ENCODE measurements at regions of chr1 and their contacts with region 1.

Region 1: GRCh38 chr1:52141513-52142219 is at the start of gene ZFYVE9:
- DNase-seq: peak; percentile 81 to 92
- ATAC-seq: peak; percentile 95
- H3K4me3 ChIP-seq: peak within 1 kb of the TSS; percentile 76 to 95
- H3K27ac ChIP-seq: peak within 1 kb of the TSS; percentile 92 to 96
- H3K4me1 ChIP-seq: peaks cover 2 to 3% of the 10 kb centered on the region in 2 donors
- H3K27me3 ChIP-seq: no peaks in the 10 kb centered on the region
- total RNA-seq, gene ZFYVE9: 19.3 to 28.8 TPM

Region 2: GRCh38 chr1:52098139-52098871 is 43.4 kb before region 1 on chr1:
- intact Hi-C with region 1: no loop called
- DNase-seq: no peak
- ATAC-seq: no peak
- H3K4me3 ChIP-seq: no peak overlapping the region
- H3K27ac ChIP-seq: no peak overlapping the region
- H3K4me1 ChIP-seq: no peaks in the 10 kb centered on the region
- H3K27me3 ChIP-seq: no peaks in the 10 kb centered on the region

Region 3: GRCh38 chr1:52268372-52268771 is 126.7 kb after region 1 on chr1:
- intact Hi-C with region 1: loop called in 1 of 2 experiments (anchors 10 kb)
- DNase-seq: peak in 1 of 2 donors; percentile 63
- ATAC-seq: no peak
- H3K4me3 ChIP-seq: no peak overlapping the region
- H3K27ac ChIP-seq: no peak overlapping the region
- H3K4me1 ChIP-seq: peaks cover 0 to 3% of the 10 kb centered on the region in 2 donors
- H3K27me3 ChIP-seq: no peaks in the 10 kb centered on the region

Region 4: DNA sequence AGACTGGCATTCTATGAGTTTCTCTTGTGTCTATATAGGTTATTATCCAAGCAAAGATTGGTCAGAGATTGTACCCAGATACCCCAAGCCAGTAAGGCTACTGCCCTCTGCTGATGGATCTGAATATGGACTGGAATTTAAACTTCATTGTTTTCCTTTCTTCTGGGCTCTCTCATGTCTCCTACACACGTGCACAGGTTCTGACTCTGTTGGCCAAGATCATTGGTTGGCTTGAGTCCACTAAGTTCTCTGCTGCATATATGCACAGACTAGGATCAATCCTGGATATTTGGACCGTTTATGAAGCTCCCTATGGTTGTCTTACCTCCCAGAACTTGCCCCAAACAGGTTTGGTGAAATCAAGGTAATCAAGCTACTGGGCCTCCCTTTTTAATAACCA is 154.7 kb after region 1 on chr1:
- intact Hi-C with region 1: loop called in 1 of 2 experiments (anchors 1 kb)
- DNase-seq: no peak
- ATAC-seq: peak; percentile 78
- H3K4me3 ChIP-seq: no peak overlapping the region
- H3K27ac ChIP-seq: no peak overlapping the region
- H3K4me1 ChIP-seq: no peaks in the 10 kb centered on the region
- H3K27me3 ChIP-seq: no peaks in the 10 kb centered on the region

Region 5: DNA sequence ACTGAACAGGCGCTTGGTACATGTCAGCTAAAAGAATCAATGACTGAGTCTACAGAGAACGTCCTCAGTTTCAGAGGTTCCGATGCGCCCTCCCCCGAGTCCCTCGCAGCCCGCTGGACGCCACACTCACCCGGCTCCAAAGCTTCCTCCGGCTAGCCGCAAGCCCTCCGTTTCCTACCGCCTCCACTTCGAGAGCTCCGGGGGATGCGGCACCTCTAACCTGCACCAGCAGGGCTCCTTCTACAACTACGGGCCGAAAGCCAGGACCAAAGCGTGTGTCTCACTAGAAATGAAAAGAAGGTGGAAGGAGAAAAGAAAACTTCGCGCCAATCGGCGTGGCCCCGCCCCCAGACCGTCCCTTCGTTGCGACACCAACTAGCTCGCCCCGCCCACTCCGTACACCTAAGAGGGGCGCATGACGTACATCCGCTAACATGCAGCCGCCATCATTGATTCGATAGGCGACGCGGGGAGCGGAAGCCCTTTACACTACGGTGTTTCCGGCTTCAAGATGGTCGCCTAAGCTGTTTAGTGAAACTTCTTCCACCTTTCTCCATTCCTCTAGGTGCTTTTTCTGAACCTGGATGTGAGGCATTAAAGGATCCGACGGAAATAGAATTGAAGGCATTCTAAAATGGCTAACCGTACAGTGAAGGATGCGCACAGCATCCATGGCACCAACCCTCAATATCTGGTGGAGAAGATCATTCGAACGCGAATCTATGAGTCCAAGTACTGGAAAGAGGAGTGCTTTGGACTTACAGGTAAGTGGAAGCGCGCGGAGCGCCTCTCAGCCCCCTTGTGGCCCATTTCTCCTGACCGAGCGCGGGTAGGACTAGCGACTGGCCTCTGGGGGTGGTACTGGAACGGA is 262.7 kb after region 1 on chr1 and contains the starts of genes ORC1 and PRPF38A:
- intact Hi-C with region 1: loop called in 1 of 2 experiments (anchors 10 kb)
- DNase-seq: peak; percentile 98 to 99
- ATAC-seq: peak; percentile 100
- H3K4me3 ChIP-seq: peak within 1 kb of the TSS; percentile 90 to 98
- H3K27ac ChIP-seq: peak within 1 kb of the TSS in 1 of 2 donors; percentile 91
- H3K4me1 ChIP-seq: peaks cover 0 to 2% of the 10 kb centered on the region in 2 donors
- H3K27me3 ChIP-seq: no peaks in the 10 kb centered on the region
- total RNA-seq, gene ORC1: 0.58 to 0.96 TPM
- total RNA-seq, gene PRPF38A: 34.7 to 36.2 TPM